Naive thymus-derived CD4-positive, alpha-beta T cell (primary cell): ENCODE measurements at regions of chr3 and their contacts with region 1.

Region 1: GRCh38 chr3:10738688-10739372 is 77.2 kb upstream of the SLC6A11 start:
- DNase-seq: peak; percentile 31 to 76 (median 58)
- ATAC-seq: peak; percentile 72
- H3K4me3 ChIP-seq: peak overlapping the region; percentile 32
- H3K4me3 Mint-ChIP-seq: peak overlapping the region; percentile 9 to 74 (median 51)
- H3K27ac ChIP-seq: no peak overlapping the region
- H3K27ac Mint-ChIP-seq: peak overlapping the region in 1 of 9 donors; percentile 51
- H3K4me1 ChIP-seq: peaks cover 0 to 6% of the 10 kb centered on the region in 2 donors
- H3K4me1 Mint-ChIP-seq: peaks cover 3 to 16% (median 9%) of the 10 kb centered on the region in 7 donors
- H3K27me3 ChIP-seq: peaks cover 0 to 10% of the 10 kb centered on the region in 2 donors
- H3K27me3 Mint-ChIP-seq: peaks cover 28 to 72% (median 53%) of the 10 kb centered on the region in 5 donors

Region 2: GRCh38 chr3:10417849-10418248 is 321.0 kb before region 1 on chr3:
- CTCF ChIA-PET with region 1: interaction called, 18 read pairs
- POLR2A ChIA-PET with region 1: no interaction called
- intact Hi-C with region 1: loop called in 1 of 2 experiments (anchors 1 kb)
- DNase-seq: peak in 1 of 9 donors; percentile 11
- ATAC-seq: peak; percentile 22
- H3K4me3 ChIP-seq: no peak overlapping the region
- H3K4me3 Mint-ChIP-seq: no peak overlapping the region
- H3K27ac ChIP-seq: no peak overlapping the region
- H3K27ac Mint-ChIP-seq: no peak overlapping the region
- H3K4me1 ChIP-seq: peaks cover 0 to 7% of the 10 kb centered on the region in 2 donors
- H3K4me1 Mint-ChIP-seq: peaks cover 0 to 11% (median 4%) of the 10 kb centered on the region in 7 donors
- H3K27me3 ChIP-seq: no peaks in the 10 kb centered on the region
- H3K27me3 Mint-ChIP-seq: peaks cover 0 to 17% (median 8%) of the 10 kb centered on the region in 5 donors

Region 3: GRCh38 chr3:10570196-10570946 is 168.5 kb before region 1 on chr3:
- CTCF ChIA-PET with region 1: no interaction called
- POLR2A ChIA-PET with region 1: no interaction called
- intact Hi-C with region 1: no loop called
- DNase-seq: no peak
- ATAC-seq: no peak
- H3K4me3 ChIP-seq: no peak overlapping the region
- H3K4me3 Mint-ChIP-seq: no peak overlapping the region
- H3K27ac ChIP-seq: no peak overlapping the region
- H3K27ac Mint-ChIP-seq: no peak overlapping the region
- H3K4me1 ChIP-seq: no peaks in the 10 kb centered on the region
- H3K4me1 Mint-ChIP-seq: no peaks in the 10 kb centered on the region
- H3K27me3 ChIP-seq: no peaks in the 10 kb centered on the region
- H3K27me3 Mint-ChIP-seq: peaks cover 6 to 19% (median 11%) of the 10 kb centered on the region in 5 donors

Region 4: DNA sequence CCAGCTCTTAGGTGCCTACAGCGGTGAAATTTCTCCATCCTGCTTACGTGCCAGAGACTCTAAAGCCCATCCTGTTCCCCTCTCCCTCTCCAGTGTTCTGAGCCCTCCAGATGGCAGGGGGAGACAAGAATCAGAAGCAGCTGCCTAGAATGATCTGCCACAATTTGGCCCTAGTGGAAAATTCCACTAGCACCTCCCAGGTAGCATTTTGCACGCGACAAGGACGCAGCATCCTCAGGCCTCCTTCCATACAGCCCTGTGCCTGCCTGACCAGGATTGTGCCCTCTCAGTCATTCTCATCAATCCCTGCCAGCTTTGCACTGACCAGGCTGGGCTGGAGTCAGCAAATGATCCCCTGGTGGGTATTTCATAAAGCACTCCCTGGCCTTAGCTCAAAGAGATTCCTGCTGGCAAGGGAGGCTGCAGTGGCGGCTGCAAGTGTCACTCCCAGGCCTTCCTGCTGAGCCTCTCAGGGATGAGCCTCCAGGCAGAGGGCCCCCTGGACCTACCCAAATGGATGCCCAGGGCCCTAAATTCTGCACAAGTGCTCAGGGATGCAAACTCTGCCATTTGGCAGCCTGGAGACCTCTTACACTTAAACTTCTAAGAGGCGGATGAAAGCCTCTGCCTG is 103.3 kb before region 1 on chr3:
- CTCF ChIA-PET with region 1: no interaction called
- POLR2A ChIA-PET with region 1: no interaction called
- intact Hi-C with region 1: no loop called
- DNase-seq: no peak
- ATAC-seq: no peak
- H3K4me3 ChIP-seq: no peak overlapping the region
- H3K4me3 Mint-ChIP-seq: no peak overlapping the region
- H3K27ac ChIP-seq: no peak overlapping the region
- H3K27ac Mint-ChIP-seq: no peak overlapping the region
- H3K4me1 ChIP-seq: no peaks in the 10 kb centered on the region
- H3K4me1 Mint-ChIP-seq: no peaks in the 10 kb centered on the region
- H3K27me3 ChIP-seq: no peaks in the 10 kb centered on the region
- H3K27me3 Mint-ChIP-seq: peaks cover 11 to 26% (median 25%) of the 10 kb centered on the region in 5 donors